ENCODE measurements at regions of chr2 and their contacts with region 1.

Region 1: GRCh38 chr2:181742922-181743722 is 62.8 kb upstream of the NEUROD1 start:
- DNase-seq: no peak

Region 2: DNA sequence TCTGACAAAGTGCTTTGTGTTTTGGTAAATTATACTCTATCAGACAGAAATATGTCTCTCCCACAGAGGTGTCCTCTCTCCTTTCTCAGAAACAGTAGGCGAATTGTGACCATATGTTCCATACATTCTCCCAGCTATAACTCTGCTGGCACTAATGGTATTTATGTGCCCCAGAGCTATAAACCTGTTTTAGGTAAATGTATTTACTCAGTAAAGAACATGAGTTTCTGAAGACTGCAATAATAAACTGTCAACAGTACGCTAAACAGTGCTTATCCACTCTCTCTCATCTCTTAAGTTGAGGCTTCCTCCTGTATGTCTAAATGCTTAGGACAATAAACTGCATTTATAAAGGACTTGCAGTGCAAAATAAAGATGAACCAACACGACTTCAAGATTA is 227.4 kb before region 1 on chr2:
- intact Hi-C with region 1: no loop called
- DNase-seq: no peak

Region 3: DNA sequence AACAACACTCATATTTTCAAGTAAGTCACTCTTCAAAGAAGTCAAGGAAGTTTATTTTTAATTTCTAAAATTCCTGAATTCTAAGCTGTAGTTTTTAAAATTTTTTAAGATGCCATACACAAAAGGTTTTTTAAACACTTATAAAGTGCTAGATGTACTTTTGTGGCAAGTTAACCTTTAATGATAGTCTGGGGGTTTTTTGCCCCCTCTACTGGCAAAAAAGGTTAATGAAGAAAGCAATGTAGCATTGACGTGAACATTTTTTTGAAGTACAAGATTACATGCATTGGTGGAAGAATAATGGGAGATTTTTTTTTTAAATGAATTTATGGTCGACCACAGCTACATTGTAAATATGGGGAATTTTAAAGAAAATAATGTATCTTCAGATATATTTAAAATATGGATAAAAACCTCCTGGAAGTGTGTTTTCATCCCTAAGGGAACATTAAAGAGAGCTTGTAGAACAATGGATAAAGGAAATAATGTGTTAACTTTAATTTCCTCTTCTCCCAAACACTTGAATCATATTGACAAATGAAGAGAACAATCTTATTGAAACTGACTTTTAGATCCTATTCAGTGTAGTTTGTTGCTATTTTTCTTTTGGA is 161.0 kb after region 1 on chr2:
- intact Hi-C with region 1: loop called (anchors 2 kb)
- DNase-seq: no peak

Region 4: DNA sequence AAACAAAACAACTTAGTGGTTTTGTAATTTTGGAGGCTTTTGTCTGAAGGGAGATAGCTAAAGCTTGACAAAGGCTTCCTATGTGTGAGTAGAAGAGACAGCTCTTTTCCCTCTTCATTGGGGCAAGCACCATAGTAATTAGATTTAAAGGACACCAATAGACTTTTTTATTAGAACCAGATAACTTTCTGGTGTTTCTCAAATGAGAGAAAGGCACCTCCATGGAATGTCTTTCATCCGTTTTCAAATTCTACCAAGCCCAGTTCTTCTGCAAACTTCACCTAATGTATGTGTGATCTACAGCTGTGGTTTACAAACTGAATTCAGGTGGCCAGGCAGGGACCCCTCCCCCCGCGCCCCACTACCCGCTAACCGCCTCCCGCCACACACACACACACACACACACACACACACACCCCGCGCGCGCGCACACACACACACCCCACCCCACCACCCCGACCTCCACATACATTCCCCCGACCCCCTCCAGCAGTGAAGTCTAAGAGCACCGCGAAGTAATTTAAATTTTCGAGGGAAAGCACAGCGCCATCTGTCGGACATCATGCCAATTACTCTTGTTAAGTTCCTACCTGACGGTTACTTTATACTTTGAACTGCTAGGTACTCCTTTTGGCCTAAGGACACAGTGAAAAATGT is 210.9 kb after region 1 on chr2:
- intact Hi-C with region 1: loop called (anchors 2 kb)
- DNase-seq: no peak

Region 5: DNA sequence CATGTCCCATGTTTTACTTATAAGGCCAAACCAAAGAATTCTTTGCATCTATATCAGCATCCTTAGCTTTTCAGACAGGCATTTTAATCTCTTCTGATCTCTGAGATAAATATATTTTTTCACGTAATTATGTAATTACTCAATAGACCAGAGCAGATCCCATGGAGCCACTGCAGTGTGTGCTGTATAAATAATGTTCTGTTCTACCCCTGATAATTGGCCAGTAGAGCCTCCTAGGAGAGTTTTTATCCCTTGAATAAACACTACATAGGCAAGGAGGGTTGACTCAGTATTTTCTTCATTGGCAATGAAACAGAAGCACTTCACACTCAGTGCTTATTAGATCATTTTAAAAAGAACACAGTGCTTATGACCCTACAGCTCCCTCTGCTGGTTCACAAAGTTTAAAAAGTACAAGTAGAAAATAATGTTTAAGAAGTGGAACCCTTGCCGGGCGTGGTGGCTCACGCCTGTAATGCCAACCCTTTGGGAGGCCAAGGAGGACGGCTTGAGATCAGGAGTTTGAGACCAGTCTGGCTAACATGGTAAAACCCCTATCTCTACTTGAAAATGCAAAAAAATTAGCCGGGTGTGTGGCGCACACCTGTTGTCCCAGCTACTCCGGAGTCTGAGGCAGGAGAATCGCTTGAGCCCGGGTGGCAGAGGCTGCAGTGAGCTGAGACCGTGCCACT is 334.5 kb after region 1 on chr2:
- intact Hi-C with region 1: loop called (anchors 5 kb)
- DNase-seq: no peak